ENCODE measurements at regions of chr5 and their contacts with region 1.

Region 1: DNA sequence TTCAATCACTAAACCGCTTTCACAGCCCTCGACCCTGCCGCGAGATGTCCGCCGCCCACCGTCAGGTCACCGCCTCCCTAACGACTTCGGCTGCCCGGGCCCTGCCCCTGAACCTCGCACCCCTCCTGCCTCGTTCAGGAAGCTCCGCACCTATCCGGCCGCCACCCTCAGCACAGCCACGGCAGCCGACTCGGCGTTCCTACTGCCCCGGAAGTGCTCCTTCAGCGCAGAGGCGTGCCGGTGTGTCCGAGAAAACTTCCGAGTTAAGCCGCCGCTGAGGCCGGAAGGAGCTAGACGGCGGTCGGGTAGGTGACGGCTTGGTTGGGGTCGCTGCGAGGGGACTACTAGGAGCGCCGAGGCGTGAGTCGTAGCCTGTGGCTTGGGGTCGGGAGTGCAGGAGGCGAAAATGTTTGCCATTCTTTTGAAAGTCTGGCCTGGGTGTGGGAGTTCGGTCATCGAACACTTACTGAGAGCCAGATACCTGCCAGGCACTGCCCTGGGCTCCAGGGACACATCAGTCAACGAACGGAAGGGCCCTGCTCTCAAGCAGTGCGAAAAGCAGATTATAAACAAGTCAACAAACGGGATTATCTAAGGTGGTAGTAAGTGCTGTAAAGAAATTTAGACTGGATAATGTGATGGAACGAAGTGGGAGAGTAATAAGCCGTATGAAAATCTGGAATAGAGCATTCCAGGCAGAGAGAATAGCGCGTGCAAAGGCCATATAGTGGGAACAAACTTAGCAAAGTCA is at the starts of genes FAM114A2 and MFAP3:
- DNase-seq: peak; percentile 93

Region 2: GRCh38 chr5:154049636-154050035 is 10.8 kb after region 1 on chr5:
- CTCF ChIA-PET with region 1: no interaction called
- POLR2A ChIA-PET with region 1: interaction called, 22 read pairs
- DNase-seq: no peak

Region 3: DNA sequence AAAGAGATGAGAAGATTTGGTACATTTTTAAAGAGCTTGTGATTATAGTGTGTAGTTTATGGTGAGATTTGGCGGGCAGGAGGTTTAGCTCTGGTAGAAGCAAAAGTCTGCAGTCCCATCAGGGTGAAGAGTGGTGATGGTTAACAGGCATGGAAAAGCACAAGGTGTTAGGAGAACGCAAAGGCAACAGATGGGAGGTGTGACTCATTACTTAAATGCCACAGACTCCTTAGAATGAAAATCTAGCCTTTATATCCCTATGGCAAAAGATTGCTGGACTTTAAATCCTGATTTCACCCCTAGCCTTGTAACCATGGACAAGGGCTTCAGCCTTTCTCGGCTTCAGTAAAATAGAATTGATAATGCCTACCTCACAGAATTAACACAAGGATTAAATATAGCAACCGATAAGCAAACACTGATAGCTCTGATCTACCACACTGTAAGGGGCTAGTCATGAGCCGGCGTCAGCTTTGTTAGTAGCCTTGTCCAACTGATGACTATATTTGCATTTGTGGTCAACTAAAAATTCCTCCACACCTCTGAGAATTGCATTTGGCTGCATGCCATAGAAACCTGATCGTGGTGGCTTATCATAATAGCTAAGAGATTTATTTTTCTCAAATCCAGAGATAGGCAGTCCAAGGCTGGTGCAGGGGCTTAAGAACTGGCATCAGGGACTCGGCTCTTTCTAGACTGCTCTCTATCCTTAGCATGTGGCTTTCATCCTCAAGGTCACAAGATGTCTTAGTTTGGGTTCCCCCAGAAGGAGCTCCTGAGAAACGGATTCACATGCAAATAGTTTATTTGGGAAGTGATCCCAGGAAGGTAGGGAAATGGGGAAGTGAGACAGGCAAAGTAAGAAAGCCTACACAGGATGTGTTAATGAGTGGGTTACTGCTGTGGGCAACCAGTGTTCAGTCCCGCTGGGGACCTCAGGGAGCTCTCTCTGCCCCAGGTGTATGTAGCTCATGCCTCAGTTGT is 19.5 kb after region 1 on chr5:
- CTCF ChIA-PET with region 1: no interaction called
- POLR2A ChIA-PET with region 1: interaction called, 14 read pairs
- DNase-seq: peak; percentile 14

Measured in HEK293T (cell line).